HepG2 (cell line): ENCODE measurements at regions of chr19 and their contacts with region 1.

Region 1: DNA sequence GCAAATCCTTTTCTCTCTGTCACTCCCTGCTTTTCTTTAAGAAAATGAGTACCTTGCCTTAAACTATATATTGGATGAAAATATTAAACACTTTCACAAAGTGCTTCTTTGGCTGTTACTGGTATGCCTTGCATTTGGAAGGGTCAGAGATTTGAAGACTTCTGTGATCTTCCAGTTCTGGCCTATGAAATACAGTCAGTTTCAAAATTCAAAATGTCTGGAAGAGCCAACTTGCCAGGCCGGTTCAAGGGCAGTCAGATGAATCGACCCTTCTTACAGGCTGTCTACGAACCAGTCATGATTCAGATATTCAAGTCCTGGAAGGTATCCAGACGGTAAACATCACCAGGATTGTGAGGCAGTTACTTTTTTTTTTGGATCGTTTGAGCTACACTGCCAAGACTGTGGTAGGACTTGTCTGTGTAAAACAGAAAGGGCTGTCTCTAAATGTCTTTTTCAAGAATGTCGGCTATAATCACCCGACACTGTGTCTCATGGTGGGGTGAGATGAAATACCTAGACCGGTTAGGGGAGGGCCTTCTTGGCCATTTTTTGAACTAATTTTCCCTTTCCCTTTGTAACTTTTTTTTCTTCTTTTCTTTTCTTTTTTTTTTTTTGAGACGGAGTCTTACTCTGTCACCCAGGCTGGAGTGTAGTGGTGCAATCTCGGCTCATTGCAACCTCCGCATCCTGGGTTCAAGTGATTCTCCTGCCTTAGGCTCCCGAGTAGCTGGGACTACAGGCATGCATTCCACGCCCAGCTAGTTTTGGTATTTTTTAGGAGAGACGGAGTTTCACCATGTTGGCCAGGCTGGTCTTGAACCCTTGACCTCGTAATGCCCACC is 11.2 kb downstream of the ACTN4 start:
- DNase-seq: peak; percentile 95
- ATAC-seq: peak; percentile 80
- H3K4me3 ChIP-seq: no peak overlapping the region; a peak in 1 of 6 replicates
- H3K27ac ChIP-seq: peak overlapping the region; percentile 69
- H3K4me1 ChIP-seq: peaks cover 98% of the 10 kb centered on the region
- H3K27me3 ChIP-seq: no peaks in the 10 kb centered on the region
- CTCF ChIP-seq: no peak
- EP300 ChIP-seq: peak; percentile 36 to 62; a peak in 1 of 4 replicates
- POLR2A ChIP-seq: peak in 1 of 2 experiments; percentile 51; a peak in 2 of 4 replicates
- RAD21 ChIP-seq: no peak

Region 2: DNA sequence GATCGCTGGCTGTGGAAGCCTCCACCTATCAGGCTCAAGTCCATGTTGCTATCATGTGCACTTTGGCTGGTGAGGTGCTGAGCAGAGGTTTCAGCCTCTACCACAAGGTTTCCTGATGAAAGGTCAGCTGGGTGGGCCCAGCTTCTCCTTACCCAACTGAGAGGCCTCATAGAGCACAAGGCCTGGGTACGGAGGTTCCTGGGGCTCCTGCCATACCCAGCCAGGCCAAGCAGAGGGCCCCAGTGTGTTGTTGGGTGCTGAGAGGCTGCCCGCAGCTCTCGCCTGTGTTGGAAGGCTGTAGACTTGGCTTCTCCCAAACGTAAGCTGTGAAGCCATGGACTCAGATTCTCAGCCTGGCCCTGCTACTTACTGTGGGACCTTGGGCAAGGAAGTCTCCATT is 16.9 kb after region 1 on chr19:
- CTCF ChIA-PET with region 1: no interaction called
- POLR2A ChIA-PET with region 1: interaction called, 21 read pairs
- in situ Hi-C with region 1: no loop called
- intact Hi-C with region 1: loop called (anchors 2 kb)
- DNase-seq: no peak
- ATAC-seq: peak; percentile 55
- H3K4me3 ChIP-seq: no peak overlapping the region
- H3K27ac ChIP-seq: peak overlapping the region; percentile 12
- H3K4me1 ChIP-seq: peaks cover 87% of the 10 kb centered on the region
- H3K27me3 ChIP-seq: no peaks in the 10 kb centered on the region
- CTCF ChIP-seq: peak; percentile 40; the same call in 1 of the 2 replicates
- EP300 ChIP-seq: no peak
- POLR2A ChIP-seq: no peak
- RAD21 ChIP-seq: no peak; the same call in 1 of the 2 replicates